Gastrocnemius medialis (tissue), 4 donors: ENCODE measurements at regions of chr19 and their contacts with region 1.

Region 1: DNA sequence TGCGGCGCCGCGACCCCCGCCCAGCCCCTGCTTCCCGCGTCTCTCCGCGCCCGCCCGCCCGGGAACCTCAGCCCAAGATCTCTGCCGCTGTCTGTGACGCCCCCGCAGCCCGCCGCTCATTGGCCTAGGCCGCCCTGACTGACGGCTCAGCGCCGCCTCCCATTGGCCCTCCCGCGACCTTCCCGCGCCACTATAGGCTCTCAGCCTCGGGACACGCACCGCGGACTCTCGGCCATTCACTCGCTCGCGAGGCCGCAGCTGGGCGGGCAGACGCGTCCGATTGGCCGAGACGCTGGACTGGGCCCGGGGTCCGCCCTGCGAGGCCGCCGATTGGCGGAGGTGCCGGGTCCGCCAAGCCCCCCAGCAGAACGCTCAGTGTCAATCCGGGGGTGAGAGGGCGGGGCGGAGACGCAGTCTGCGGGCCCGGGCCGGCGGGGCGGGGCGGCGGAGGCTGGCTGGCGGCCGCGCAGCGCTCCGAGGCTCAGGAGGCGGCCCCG is at the start of gene PRKACA:
- DNase-seq: peak; percentile 99
- ATAC-seq: peak; percentile 59 to 73
- H3K4me3 ChIP-seq: peak within 1 kb of the TSS; percentile 83 to 99 (median 95)
- H3K27ac ChIP-seq: peak within 1 kb of the TSS; percentile 99 to 100 (median 99)
- H3K4me1 ChIP-seq: peaks cover 60% of the 10 kb centered on the region in 2 donors
- H3K27me3 ChIP-seq: no peaks in the 10 kb centered on the region
- CTCF ChIP-seq: no peak
- POLR2A ChIP-seq: peak; percentile 76 to 87
- total RNA-seq, gene PRKACA: 74.7 to 180 (median 147) TPM

Region 2: DNA sequence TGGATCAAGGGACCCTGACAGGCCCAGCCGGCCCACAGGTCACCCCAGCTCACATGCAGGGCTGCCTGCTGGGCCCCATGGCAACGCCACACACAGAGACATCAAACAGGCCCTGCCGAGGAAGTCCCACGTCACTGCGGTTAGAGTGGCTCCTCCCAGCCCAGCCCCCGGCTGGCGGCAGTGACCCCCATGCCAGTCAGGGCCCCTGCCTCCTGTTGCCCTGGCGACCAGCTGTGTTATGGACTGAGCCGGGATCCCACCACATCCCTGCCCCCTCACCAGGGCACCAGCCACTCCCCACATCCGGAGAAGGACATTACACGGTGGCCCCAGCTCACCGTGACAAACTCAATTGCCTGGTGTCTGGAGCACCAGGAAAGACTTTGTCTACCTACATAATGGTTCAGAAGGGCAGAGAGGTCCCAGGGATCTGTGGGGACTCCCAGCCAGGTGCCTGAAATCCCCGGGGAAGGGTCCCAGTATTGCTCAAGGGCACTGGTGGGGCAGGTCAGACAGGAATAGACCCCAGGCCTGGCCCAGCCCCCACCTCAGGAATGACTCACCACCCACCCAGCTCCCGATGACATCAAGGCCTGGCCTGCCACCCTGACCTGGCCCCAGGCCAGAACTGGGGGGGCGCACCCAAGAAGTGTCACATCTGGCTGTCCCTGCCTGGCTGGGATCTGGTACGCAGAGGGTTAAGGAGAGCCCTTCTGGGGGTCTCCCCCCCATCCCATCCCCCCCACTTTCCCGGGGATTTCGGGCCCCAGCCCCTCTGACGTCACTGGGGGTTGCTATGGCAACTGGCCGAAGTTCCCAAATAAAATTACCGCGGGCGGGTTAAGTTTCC is 270.9 kb before region 1 on chr19:
- in situ Hi-C with region 1: no loop called
- intact Hi-C with region 1: loop called (anchors 5 kb)
- DNase-seq: peak; percentile 69 to 87
- ATAC-seq: peak; percentile 38 to 54
- H3K4me3 ChIP-seq: peak overlapping the region; percentile 68 to 78 (median 70)
- H3K27ac ChIP-seq: peak overlapping the region; percentile 96 to 100 (median 98)
- H3K4me1 ChIP-seq: peaks cover 49 to 54% of the 10 kb centered on the region in 2 donors
- H3K27me3 ChIP-seq: no peaks in the 10 kb centered on the region
- CTCF ChIP-seq: no peak
- POLR2A ChIP-seq: peak; percentile 7 to 22

Region 3: GRCh38 chr19:14081325-14082093 is 36.2 kb before region 1 on chr19:
- in situ Hi-C with region 1: loop called in 1 of 4 experiments (anchors 5 kb)
- intact Hi-C with region 1: no loop called
- DNase-seq: peak; percentile 98 to 99
- ATAC-seq: peak; percentile 98 to 100
- H3K4me3 ChIP-seq: peak overlapping the region; percentile 62 to 97 (median 93)
- H3K27ac ChIP-seq: peak overlapping the region; percentile 80 to 98 (median 94)
- H3K4me1 ChIP-seq: peaks cover 17 to 18% of the 10 kb centered on the region in 2 donors
- H3K27me3 ChIP-seq: no peaks in the 10 kb centered on the region
- CTCF ChIP-seq: no peak
- POLR2A ChIP-seq: peak; percentile 72 to 76

Region 4: DNA sequence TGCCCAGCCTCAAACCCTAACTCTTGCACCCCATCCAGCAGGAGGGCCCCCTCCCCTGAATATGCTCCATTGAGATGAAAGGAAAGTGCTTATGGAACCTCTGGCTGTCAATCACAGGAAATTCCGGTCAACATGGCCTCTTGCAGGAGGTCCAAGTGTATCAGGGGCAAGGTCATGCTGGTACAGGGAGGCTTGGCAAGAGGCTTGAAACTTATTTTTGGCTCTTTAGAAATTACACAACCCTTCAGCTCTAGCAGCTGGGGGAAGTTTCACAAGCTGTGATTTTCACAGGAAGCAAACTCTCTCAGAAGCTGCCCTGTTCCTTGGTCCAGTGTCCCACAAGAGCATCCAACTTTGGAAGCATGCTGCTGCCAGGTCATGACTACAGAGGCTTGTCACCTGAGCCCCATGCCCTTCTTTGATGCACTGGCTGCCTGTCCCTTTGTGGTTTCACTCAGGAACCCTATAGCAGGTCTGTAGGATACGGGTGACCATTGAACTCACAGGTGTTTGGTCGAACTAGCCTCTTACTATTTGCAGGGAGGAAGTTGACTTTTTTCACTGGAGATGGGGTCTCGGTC is 10.3 kb after region 1 on chr19:
- in situ Hi-C with region 1: no loop called
- intact Hi-C with region 1: loop called (anchors 1 kb)
- DNase-seq: peak; percentile 75 to 95
- ATAC-seq: peak; percentile 88 to 95
- H3K4me3 ChIP-seq: peak overlapping the region in 1 of 4 donors; percentile 6
- H3K27ac ChIP-seq: peak overlapping the region; percentile 86 to 96 (median 94)
- H3K4me1 ChIP-seq: peaks cover 29 to 31% of the 10 kb centered on the region in 2 donors
- H3K27me3 ChIP-seq: no peaks in the 10 kb centered on the region
- CTCF ChIP-seq: no peak
- POLR2A ChIP-seq: no peak

Region 5: GRCh38 chr19:14517840-14518505 is 400.3 kb after region 1 on chr19 and contains the start of gene DNAJB1:
- in situ Hi-C with region 1: no loop called
- intact Hi-C with region 1: loop called (anchors 1 kb)
- DNase-seq: peak; percentile 76 to 81
- ATAC-seq: peak; percentile 79 to 81
- H3K4me3 ChIP-seq: peak within 1 kb of the TSS; percentile 68 to 99 (median 88)
- H3K27ac ChIP-seq: peak within 1 kb of the TSS; percentile 96 to 100 (median 100)
- H3K4me1 ChIP-seq: peaks cover 31 to 33% of the 10 kb centered on the region in 2 donors
- H3K27me3 ChIP-seq: no peaks in the 10 kb centered on the region
- CTCF ChIP-seq: no peak
- POLR2A ChIP-seq: peak; percentile 95 to 100
- total RNA-seq, gene DNAJB1: 12.3 to 27.3 (median 16.6) TPM